A673 (cell line): ENCODE measurements at regions of chr11 and their contacts with region 1.

Region 1: DNA sequence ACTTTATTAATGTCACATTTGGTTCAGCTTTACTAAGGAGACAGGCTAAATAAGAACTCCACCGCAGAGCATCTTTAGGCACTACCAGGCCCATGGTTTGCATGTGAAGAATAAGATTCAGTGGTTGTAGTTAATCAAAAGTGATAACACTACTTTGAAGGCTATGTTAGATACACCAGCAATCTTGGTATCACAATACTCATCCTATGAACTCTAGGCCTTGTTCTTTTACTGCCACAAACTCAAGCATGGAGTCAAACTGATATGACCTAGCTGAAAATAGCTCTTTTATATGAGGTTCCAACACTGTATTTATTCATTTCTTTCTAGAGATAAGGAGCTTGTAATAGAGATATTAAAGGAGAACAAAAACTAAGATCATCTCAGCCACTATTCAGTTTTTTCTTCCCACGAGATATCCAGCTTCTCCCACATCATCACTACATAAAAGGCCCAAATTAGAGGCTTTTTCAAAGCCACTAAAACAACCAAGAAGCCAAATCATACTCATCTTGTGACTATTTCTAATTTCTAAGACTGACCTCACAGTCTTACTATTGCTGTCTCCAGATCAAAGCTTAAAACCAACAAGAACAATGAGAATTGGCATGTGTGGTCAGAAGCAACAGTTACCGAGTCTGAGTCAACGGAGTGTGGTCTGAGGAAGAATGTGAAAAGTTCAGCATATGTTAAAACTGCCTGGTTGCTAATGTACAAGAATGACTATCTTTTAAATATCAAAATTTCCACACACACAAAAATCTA is 25.1 kb upstream of the GUCY1A2 start:
- DNase-seq: no peak
- H3K4me3 ChIP-seq: no peak overlapping the region
- H3K27ac ChIP-seq: no peak overlapping the region
- H3K4me1 ChIP-seq: no peaks in the 10 kb centered on the region
- H3K27me3 ChIP-seq: no peaks in the 10 kb centered on the region
- CTCF ChIP-seq: no peak

Region 2: GRCh38 chr11:106087815-106088435 is 955.5 kb before region 1 on chr11:
- CTCF ChIA-PET with region 1: no interaction called
- POLR2A ChIA-PET with region 1: no interaction called
- intact Hi-C with region 1: loop called (anchors 5 kb)
- DNase-seq: peak; percentile 71
- H3K4me3 ChIP-seq: no peak overlapping the region
- H3K27ac ChIP-seq: no peak overlapping the region
- H3K4me1 ChIP-seq: peaks cover 15% of the 10 kb centered on the region
- H3K27me3 ChIP-seq: no peaks in the 10 kb centered on the region
- CTCF ChIP-seq: peak; percentile 97

Region 3: GRCh38 chr11:106466521-106467080 is 576.8 kb before region 1 on chr11:
- CTCF ChIA-PET with region 1: no interaction called
- POLR2A ChIA-PET with region 1: no interaction called
- intact Hi-C with region 1: loop called (anchors 5 kb)
- DNase-seq: peak; percentile 16
- H3K4me3 ChIP-seq: no peak overlapping the region
- H3K27ac ChIP-seq: no peak overlapping the region
- H3K4me1 ChIP-seq: peaks cover 3% of the 10 kb centered on the region
- H3K27me3 ChIP-seq: peaks cover 29% of the 10 kb centered on the region
- CTCF ChIP-seq: no peak

Region 4: GRCh38 chr11:107054391-107054790 is 11.0 kb after region 1 on chr11:
- CTCF ChIA-PET with region 1: no interaction called
- POLR2A ChIA-PET with region 1: no interaction called
- intact Hi-C with region 1: no loop called
- DNase-seq: no peak
- H3K4me3 ChIP-seq: no peak overlapping the region
- H3K27ac ChIP-seq: no peak overlapping the region
- H3K4me1 ChIP-seq: no peaks in the 10 kb centered on the region
- H3K27me3 ChIP-seq: no peaks in the 10 kb centered on the region
- CTCF ChIP-seq: no peak

Region 5: GRCh38 chr11:107157146-107157808 is 113.9 kb after region 1 on chr11:
- CTCF ChIA-PET with region 1: no interaction called
- POLR2A ChIA-PET with region 1: no interaction called
- intact Hi-C with region 1: no loop called
- DNase-seq: no peak
- H3K4me3 ChIP-seq: no peak overlapping the region
- H3K27ac ChIP-seq: no peak overlapping the region
- H3K4me1 ChIP-seq: no peaks in the 10 kb centered on the region
- H3K27me3 ChIP-seq: peaks cover 4% of the 10 kb centered on the region
- CTCF ChIP-seq: no peak